Endothelial cell of umbilical vein (primary cell): ENCODE measurements at regions of chr6 and their contacts with region 1.

Region 1: GRCh38 chr6:128452713-128453112 is 67.7 kb downstream of the PTPRK start:
- DNase-seq: no peak
- H3K4me3 ChIP-seq: no peak overlapping the region
- H3K27ac ChIP-seq: no peak overlapping the region
- H3K4me1 ChIP-seq: no peaks in the 10 kb centered on the region
- H3K27me3 ChIP-seq: no peaks in the 10 kb centered on the region
- CTCF ChIP-seq: no peak
- POLR2A ChIP-seq: no peak

Region 2: GRCh38 chr6:128465368-128466343 is 12.9 kb after region 1 on chr6:
- CTCF ChIA-PET with region 1: interaction called, 4 read pairs
- POLR2A ChIA-PET with region 1: no interaction called
- dilution Hi-C with region 1: no loop called
- intact Hi-C with region 1: loop called (anchors 2 kb)
- DNase-seq: no peak
- H3K4me3 ChIP-seq: no peak overlapping the region
- H3K27ac ChIP-seq: no peak overlapping the region
- H3K4me1 ChIP-seq: peaks cover 8% of the 10 kb centered on the region
- H3K27me3 ChIP-seq: no peaks in the 10 kb centered on the region
- CTCF ChIP-seq: no peak
- POLR2A ChIP-seq: no peak

Region 3: DNA sequence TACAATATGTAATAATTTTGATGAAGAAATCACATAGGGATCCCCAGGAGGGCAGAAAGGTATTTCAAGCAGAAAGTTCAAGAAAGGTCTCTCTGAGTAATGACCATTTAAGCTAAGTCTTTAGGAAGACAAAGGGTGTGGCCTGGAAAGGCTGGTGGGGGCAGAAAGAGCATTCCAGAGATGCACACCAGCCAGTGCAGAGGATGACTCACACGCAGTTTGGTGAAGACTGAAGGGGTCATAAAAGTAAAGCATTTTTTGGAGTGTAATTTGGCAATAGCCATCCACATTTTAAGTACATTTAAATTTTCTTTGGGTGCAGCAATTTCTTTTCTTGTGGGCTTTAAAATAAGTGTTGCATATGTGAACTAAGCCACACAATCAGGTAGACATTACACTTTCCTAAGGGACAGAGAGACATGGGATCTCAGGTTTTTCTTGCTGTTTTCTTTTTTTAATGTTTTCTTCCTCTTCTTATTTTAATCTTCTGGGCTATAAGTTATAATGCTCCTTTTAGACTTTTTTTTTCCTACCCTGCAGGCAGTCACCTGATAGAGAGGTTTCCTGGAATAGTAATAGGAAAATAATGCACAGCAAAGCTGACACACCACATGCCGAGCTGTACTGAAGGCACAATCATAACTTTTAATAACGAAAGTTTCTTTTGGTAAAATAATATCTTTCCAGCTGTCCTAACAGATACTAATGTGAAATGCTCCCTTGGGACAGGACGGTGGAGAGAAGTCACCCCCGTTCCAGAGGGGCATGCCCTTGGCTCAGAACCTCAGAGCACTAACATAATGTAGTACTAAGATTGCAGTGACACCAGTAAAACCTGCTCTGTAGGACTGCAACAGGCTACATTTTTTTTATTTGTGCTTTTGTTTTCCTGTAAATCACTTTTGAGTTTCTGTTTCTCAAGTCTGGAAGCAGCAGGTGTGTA is 117.3 kb after region 1 on chr6:
- CTCF ChIA-PET with region 1: no interaction called
- POLR2A ChIA-PET with region 1: no interaction called
- dilution Hi-C with region 1: no loop called
- intact Hi-C with region 1: no loop called
- DNase-seq: peak; percentile 9
- H3K4me3 ChIP-seq: no peak overlapping the region
- H3K27ac ChIP-seq: no peak overlapping the region
- H3K4me1 ChIP-seq: peaks cover 5% of the 10 kb centered on the region
- H3K27me3 ChIP-seq: no peaks in the 10 kb centered on the region
- CTCF ChIP-seq: no peak
- POLR2A ChIP-seq: no peak